Naive thymus-derived CD4-positive, alpha-beta T cell (primary cell): ENCODE measurements at regions of chr6 and their contacts with region 1.

Region 1: DNA sequence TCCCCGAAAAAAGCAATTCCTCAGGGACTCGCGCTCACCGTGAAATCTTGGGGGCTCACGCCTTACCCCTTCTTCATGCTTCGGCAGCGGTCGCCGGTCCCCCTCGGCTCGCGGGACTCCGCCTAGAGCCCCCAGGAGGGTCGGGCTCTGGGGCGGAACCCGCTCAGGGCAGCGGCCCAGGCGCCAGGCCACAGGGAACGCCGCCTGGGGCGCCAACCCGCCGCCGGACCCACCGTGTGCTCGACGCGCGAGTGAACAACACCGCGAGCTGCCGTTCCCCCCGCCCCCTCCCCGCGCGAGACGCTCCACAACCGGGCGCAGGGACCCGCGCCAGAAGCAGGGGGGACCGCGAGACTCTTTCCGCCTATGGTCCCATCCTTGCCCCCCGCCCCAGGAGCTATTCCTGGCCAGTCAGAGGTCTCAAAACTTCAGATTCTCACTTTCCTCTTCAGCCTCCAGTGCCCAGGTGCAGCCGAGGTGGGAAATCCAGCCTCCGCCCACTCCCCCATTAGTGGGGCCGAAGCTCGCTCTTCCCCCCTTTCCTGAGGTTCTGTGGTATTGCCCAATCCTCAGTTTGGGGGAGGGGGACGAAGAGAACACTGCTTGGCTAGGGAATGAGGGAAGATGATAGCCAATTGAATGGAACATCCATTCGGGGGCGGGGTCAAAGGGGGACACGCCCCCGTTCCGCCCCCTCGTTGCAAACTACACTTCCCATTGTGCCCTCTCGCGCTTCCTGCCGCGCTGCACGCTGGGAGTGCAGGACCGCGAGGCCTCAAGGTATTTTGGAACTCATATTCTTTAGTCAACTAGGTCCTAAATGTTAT is at the start of gene WASF1:
- DNase-seq: peak; percentile 84 to 94 (median 91)
- ATAC-seq: peak; percentile 96
- H3K4me3 ChIP-seq: peak within 1 kb of the TSS; percentile 83
- H3K4me3 Mint-ChIP-seq: peak within 1 kb of the TSS in 6 of 10 donors; percentile 84 to 90 (median 88)
- H3K27ac ChIP-seq: peak within 1 kb of the TSS; percentile 90
- H3K27ac Mint-ChIP-seq: peak within 1 kb of the TSS in 8 of 9 donors; percentile 2 to 87 (median 66)
- H3K4me1 ChIP-seq: peaks cover 17 to 23% of the 10 kb centered on the region in 2 donors
- H3K4me1 Mint-ChIP-seq: peaks cover 4 to 8% (median 5%) of the 10 kb centered on the region in 7 donors
- H3K27me3 ChIP-seq: peaks cover 0 to 7% of the 10 kb centered on the region in 2 donors
- H3K27me3 Mint-ChIP-seq: peaks cover 8 to 21% (median 9%) of the 10 kb centered on the region in 5 donors
- total RNA-seq, gene WASF1: 0.19 to 4.7 (median 0.51) TPM

Region 2: DNA sequence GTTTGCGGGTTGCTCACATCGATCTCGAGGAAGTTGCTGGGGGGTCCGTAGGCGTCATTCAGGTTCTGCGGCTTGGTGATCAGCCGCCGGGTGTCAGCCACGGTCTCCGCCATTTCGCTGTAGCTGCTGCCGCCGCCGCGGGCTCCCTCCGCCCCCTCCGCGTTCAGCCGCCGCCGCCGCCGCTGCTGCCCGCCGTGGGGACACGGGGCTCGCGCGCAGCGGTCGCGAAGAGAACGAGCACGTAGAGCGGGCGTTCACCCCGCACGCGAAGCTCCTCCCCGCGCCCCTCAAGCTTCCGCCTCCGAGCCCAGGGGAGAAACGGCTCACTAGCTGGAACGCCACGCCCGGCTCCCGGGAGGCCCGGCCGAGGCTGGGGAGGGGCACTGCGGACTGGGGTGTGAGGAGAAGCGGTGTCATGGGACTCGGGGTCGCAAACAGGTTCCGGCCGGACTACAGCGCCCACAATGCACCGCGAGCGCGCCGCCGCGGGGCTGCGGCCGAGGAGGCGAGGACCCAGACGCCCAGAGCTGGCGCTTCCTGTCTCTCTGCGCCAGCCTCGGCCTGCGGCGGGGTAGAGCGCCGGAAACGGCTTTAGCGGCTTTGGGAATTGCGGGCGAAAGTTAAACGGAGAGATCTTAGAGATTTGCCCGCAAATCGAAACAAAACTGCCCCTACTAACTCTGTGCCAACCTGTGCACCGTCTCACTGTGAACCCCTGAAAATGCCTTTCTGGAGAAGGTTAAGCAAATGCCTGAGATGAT is 1918.6 kb before region 1 on chr6 and contains the start of gene SNX3:
- CTCF ChIA-PET with region 1: no interaction called
- POLR2A ChIA-PET with region 1: no interaction called
- intact Hi-C with region 1: loop called in 1 of 2 experiments (anchors 10 kb)
- DNase-seq: peak; percentile 81 to 92 (median 91)
- ATAC-seq: peak; percentile 92
- H3K4me3 ChIP-seq: peak within 1 kb of the TSS; percentile 76
- H3K4me3 Mint-ChIP-seq: peak within 1 kb of the TSS; percentile 78 to 97 (median 91)
- H3K27ac ChIP-seq: peak within 1 kb of the TSS; percentile 96
- H3K27ac Mint-ChIP-seq: peak within 1 kb of the TSS; percentile 85 to 98 (median 96)
- H3K4me1 ChIP-seq: peaks cover 0 to 8% of the 10 kb centered on the region in 2 donors
- H3K4me1 Mint-ChIP-seq: peaks cover 16 to 40% (median 26%) of the 10 kb centered on the region in 7 donors
- H3K27me3 ChIP-seq: no peaks in the 10 kb centered on the region
- H3K27me3 Mint-ChIP-seq: peaks cover 0 to 14% (median 0%) of the 10 kb centered on the region in 5 donors
- total RNA-seq, gene SNX3: 42.5 to 87.4 (median 65.8) TPM

Region 3: GRCh38 chr6:109440331-109441068 is 739.1 kb before region 1 on chr6 and contains the starts of genes PPIL6 and SMPD2:
- CTCF ChIA-PET with region 1: no interaction called
- POLR2A ChIA-PET with region 1: no interaction called
- intact Hi-C with region 1: loop called in 1 of 2 experiments (anchors 1 kb)
- DNase-seq: peak; percentile 63 to 85 (median 77)
- ATAC-seq: peak; percentile 91
- H3K4me3 ChIP-seq: peak within 1 kb of the TSS; percentile 65
- H3K4me3 Mint-ChIP-seq: peak within 1 kb of the TSS; percentile 90 to 95 (median 94)
- H3K27ac ChIP-seq: peak within 1 kb of the TSS; percentile 98
- H3K27ac Mint-ChIP-seq: peak within 1 kb of the TSS; percentile 87 to 97 (median 93)
- H3K4me1 ChIP-seq: peaks cover 11% of the 10 kb centered on the region in 2 donors
- H3K4me1 Mint-ChIP-seq: peaks cover 10 to 32% (median 21%) of the 10 kb centered on the region in 7 donors
- H3K27me3 ChIP-seq: no peaks in the 10 kb centered on the region
- H3K27me3 Mint-ChIP-seq: peaks cover 0 to 2% (median 0%) of the 10 kb centered on the region in 5 donors
- total RNA-seq, gene PPIL6: 0.13 to 1.9 (median 0.40) TPM in 4 of 5 experiments, not detected in the other
- total RNA-seq, gene SMPD2: 16.9 to 33.7 (median 19.6) TPM

Region 4: GRCh38 chr6:109912118-109912517 is 267.5 kb before region 1 on chr6:
- CTCF ChIA-PET with region 1: no interaction called
- POLR2A ChIA-PET with region 1: no interaction called
- intact Hi-C with region 1: no loop called
- DNase-seq: no peak
- ATAC-seq: no peak
- H3K4me3 ChIP-seq: no peak overlapping the region
- H3K4me3 Mint-ChIP-seq: no peak overlapping the region
- H3K27ac ChIP-seq: no peak overlapping the region
- H3K27ac Mint-ChIP-seq: no peak overlapping the region
- H3K4me1 ChIP-seq: no peaks in the 10 kb centered on the region
- H3K4me1 Mint-ChIP-seq: no peaks in the 10 kb centered on the region
- H3K27me3 ChIP-seq: peaks cover 0 to 3% of the 10 kb centered on the region in 2 donors
- H3K27me3 Mint-ChIP-seq: peaks cover 4 to 18% (median 7%) of the 10 kb centered on the region in 5 donors

Region 5: GRCh38 chr6:110039364-110039980 is 140.1 kb before region 1 on chr6:
- CTCF ChIA-PET with region 1: interaction called, 5 read pairs
- POLR2A ChIA-PET with region 1: interaction called, 3 read pairs
- intact Hi-C with region 1: loop called (anchors 1 kb)
- DNase-seq: peak; percentile 66 to 81 (median 78)
- ATAC-seq: peak; percentile 92
- H3K4me3 ChIP-seq: peak overlapping the region; percentile 54
- H3K4me3 Mint-ChIP-seq: peak overlapping the region; percentile 89 to 97 (median 90)
- H3K27ac ChIP-seq: peak overlapping the region; percentile 53
- H3K27ac Mint-ChIP-seq: peak overlapping the region; percentile 80 to 98 (median 92)
- H3K4me1 ChIP-seq: peaks cover 0 to 14% of the 10 kb centered on the region in 2 donors
- H3K4me1 Mint-ChIP-seq: peaks cover 9 to 17% (median 13%) of the 10 kb centered on the region in 7 donors
- H3K27me3 ChIP-seq: no peaks in the 10 kb centered on the region
- H3K27me3 Mint-ChIP-seq: no peaks in the 10 kb centered on the region

Region 6: GRCh38 chr6:110296241-110297025 is 116.8 kb after region 1 on chr6:
- CTCF ChIA-PET with region 1: no interaction called
- POLR2A ChIA-PET with region 1: no interaction called
- intact Hi-C with region 1: loop called (anchors 1 to 5 kb)
- DNase-seq: peak in 2 of 9 donors; percentile 2 to 15
- ATAC-seq: no peak
- H3K4me3 ChIP-seq: no peak overlapping the region
- H3K4me3 Mint-ChIP-seq: peak overlapping the region in 8 of 10 donors; percentile 53 to 77 (median 68)
- H3K27ac ChIP-seq: no peak overlapping the region
- H3K27ac Mint-ChIP-seq: peak overlapping the region in 2 of 9 donors; percentile 18 to 62
- H3K4me1 ChIP-seq: no peaks in the 10 kb centered on the region
- H3K4me1 Mint-ChIP-seq: peaks cover 0 to 23% (median 15%) of the 10 kb centered on the region in 7 donors
- H3K27me3 ChIP-seq: no peaks in the 10 kb centered on the region
- H3K27me3 Mint-ChIP-seq: peaks cover 23 to 37% (median 23%) of the 10 kb centered on the region in 5 donors

Region 7: GRCh38 chr6:110682460-110682853 is 502.8 kb after region 1 on chr6:
- CTCF ChIA-PET with region 1: no interaction called
- POLR2A ChIA-PET with region 1: no interaction called
- intact Hi-C with region 1: no loop called
- DNase-seq: peak in 8 of 9 donors; percentile 42 to 84 (median 76)
- ATAC-seq: peak; percentile 99
- H3K4me3 ChIP-seq: no peak overlapping the region
- H3K4me3 Mint-ChIP-seq: no peak overlapping the region
- H3K27ac ChIP-seq: no peak overlapping the region
- H3K27ac Mint-ChIP-seq: peak overlapping the region in 4 of 9 donors; percentile 23 to 55 (median 44)
- H3K4me1 ChIP-seq: peaks cover 5 to 8% of the 10 kb centered on the region in 2 donors
- H3K4me1 Mint-ChIP-seq: peaks cover 5 to 18% (median 11%) of the 10 kb centered on the region in 7 donors
- H3K27me3 ChIP-seq: no peaks in the 10 kb centered on the region
- H3K27me3 Mint-ChIP-seq: no peaks in the 10 kb centered on the region

Region 8: DNA sequence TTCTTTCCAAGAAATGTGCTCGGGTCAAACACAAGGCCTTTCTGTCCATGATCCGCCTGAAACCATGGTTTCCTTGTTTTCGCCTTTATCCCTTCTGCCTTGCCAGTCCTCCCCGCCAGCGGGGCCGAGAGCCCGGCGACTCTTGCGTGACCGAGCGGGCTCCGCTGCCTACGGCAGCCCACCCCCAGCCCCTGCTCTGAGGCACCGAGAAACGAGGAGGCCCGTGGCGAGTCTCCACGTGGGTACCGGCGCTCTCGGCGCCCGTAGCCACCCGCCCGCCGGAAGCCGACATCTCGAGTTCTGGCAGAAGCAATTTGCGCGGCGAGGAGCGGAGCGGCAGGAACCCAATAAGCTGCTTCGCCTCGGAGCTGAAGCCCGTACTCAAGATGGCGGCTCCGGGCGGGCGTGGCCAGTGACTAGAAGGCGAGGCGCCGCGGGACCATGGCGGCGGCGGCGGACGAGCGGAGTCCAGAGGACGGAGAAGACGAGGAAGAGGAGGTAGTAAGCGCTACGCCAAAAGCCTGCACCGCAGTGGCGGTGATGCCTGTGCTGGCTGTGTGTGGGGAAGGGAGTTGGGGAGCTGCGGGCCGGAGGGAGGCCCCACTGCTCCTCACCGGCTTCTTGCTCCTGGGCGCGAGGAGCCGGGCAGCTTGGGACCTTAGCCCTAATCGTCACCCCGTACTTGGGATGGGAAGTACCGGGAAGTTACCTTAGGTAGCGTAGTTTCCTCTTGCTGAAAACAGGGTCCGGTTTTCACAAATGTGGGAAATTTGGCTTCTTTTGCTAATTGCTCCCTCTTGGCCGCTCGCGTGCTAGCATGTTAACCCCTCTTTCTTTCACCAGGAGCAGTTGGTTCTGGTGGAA is 778.9 kb after region 1 on chr6 and contains the start of gene GTF3C6:
- CTCF ChIA-PET with region 1: no interaction called
- POLR2A ChIA-PET with region 1: interaction called, 4 read pairs
- intact Hi-C with region 1: loop called (anchors 1 kb)
- DNase-seq: peak; percentile 85 to 94 (median 91)
- ATAC-seq: peak; percentile 99
- H3K4me3 ChIP-seq: peak within 1 kb of the TSS; percentile 86
- H3K4me3 Mint-ChIP-seq: peak within 1 kb of the TSS; percentile 95 to 99 (median 96)
- H3K27ac ChIP-seq: peak within 1 kb of the TSS; percentile 81
- H3K27ac Mint-ChIP-seq: peak within 1 kb of the TSS; percentile 96 to 99 (median 97)
- H3K4me1 ChIP-seq: peaks cover 4% of the 10 kb centered on the region in 2 donors
- H3K4me1 Mint-ChIP-seq: peaks cover 13 to 27% (median 20%) of the 10 kb centered on the region in 7 donors
- H3K27me3 ChIP-seq: no peaks in the 10 kb centered on the region
- H3K27me3 Mint-ChIP-seq: peaks cover 0 to 7% (median 0%) of the 10 kb centered on the region in 5 donors
- total RNA-seq, gene GTF3C6: 18.1 to 100 (median 29.9) TPM